Adrenal gland (tissue), 19 donors: ENCODE measurements at regions of chr10 and their contacts with region 1.

Region 1: DNA sequence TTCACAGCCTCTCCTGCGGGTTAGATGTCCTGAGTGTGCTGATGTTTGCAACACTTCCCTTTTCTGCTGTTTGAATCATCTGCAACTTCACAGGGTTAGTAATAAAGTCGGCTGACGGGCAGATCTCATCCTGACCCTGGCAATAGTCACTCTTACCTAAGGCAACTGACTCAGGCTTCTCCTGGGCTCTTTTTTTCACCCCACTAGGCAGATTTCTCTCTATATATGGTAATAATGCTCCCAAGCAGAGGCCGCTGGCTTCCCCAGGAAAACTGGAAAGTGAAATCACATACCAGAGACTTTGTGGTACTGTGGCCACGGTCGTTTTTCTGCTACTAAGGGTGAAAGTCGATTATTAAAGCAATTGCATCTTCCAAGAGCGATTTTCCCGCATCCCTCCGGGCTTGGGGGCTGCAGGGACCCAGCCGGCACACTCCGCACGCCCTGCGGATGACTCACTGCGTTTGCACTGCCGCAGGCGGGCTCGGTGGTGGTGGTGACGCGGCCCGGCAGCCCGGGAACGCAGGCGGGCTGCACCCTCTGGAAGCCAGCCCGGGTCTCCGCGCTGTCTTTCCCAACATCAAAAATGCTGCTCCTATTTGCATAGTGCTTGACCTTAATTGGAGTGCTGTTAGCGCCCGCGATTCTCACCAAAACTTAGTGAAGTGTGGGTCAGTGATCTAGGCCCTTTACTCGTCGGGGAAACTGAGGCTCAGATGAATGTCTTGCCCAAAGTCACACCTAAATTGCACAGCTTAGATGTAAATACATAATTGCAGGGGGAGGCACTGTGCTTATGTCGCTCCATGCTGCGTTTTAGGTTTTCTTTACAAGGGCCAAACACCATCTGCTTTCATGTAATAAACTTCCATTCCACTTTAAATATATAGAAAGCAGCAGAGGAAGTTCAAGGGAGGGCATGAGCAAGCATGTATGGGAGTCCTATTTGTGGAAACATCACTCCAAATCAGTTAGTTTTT is 47.6 kb upstream of the ITGB1 start:
- DNase-seq: peak; percentile 78 to 88 (median 86)
- H3K4me3 ChIP-seq: peak overlapping the region in 2 of 4 donors; percentile 41 to 51
- H3K27ac ChIP-seq: peak overlapping the region; percentile 29 to 91 (median 76)
- H3K4me1 ChIP-seq: peaks cover 0 to 14% of the 10 kb centered on the region in 2 donors
- H3K27me3 ChIP-seq: no peaks in the 10 kb centered on the region
- CTCF ChIP-seq: no peak
- POLR2A ChIP-seq: peak; percentile 17 to 56

Region 2: GRCh38 chr10:32795598-32796183 is 209.9 kb before region 1 on chr10:
- intact Hi-C with region 1: loop called in 1 of 2 experiments (anchors 2 kb)
- DNase-seq: peak in 1 of 7 donors; percentile 10
- H3K4me3 ChIP-seq: no peak overlapping the region
- H3K27ac ChIP-seq: no peak overlapping the region
- H3K4me1 ChIP-seq: no peaks in the 10 kb centered on the region
- H3K27me3 ChIP-seq: no peaks in the 10 kb centered on the region
- CTCF ChIP-seq: peak; percentile 48 to 87 (median 75)
- POLR2A ChIP-seq: no peak